WTC11 (cell line): ENCODE measurements at regions of chr22 and their contacts with region 1.

Region 1: DNA sequence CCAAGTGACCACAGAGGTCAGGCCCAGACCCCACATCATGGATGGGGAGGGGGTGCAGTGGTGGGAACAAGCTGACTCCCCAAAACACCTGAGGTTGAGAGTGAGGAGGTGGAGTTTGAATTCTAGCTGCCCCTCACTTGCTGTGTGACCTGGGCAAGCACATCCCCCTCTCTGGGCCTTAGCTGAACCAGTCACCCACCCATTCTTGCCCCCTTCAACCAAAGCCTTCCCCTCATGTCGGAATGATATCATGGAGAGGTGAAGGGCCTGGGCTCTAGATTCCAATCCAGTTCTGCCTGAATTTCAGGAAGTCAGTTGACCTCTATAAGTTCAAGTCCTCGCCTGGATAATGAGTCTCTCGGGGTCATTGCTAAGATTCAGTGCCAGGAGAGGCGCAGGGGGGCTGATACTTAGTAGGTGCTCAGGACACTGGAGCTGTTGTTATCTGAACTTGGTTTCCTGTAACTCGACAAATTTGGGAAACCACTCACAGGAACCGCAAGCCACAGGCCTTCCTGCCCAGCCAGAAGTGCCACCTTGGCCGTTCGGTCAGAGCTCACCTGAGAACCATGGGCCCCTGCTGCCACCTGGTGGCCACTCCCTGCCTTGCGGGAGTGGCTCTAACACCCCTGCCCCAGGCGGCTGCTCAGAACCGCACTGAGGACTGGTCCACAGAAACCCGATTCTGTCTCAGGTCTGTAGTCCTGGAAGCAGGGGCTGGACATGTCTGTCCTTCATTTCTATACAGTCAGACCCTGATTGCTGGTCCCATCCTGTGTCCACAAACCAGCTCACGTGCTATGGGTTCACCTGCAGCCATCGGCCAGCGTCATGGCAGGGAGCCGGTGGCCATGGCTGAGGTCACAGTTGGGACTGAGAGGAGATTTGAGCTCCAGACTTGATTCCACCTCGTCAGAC is 6.9 kb downstream of the CDC42EP1 start:
- DNase-seq: peak; percentile 92
- ATAC-seq: peak; percentile 81
- H3K4me3 Mint-ChIP-seq: no peak overlapping the region
- H3K27ac Mint-ChIP-seq: no peak overlapping the region
- H3K4me1 Mint-ChIP-seq: peaks cover 46% of the 10 kb centered on the region
- H3K27me3 Mint-ChIP-seq: peaks cover 10% of the 10 kb centered on the region
- CTCF ChIP-seq: peak; percentile 90

Region 2: GRCh38 chr22:37498289-37498909 is 68.8 kb before region 1 on chr22:
- CTCF ChIA-PET with region 1: interaction called, 12 read pairs
- POLR2A ChIA-PET with region 1: no interaction called
- DNase-seq: peak; percentile 90
- ATAC-seq: peak; percentile 92
- H3K4me3 Mint-ChIP-seq: no peak overlapping the region
- H3K27ac Mint-ChIP-seq: no peak overlapping the region
- H3K4me1 Mint-ChIP-seq: peaks cover 34% of the 10 kb centered on the region
- H3K27me3 Mint-ChIP-seq: no peaks in the 10 kb centered on the region
- CTCF ChIP-seq: peak; percentile 78

Region 3: GRCh38 chr22:37538590-37539357 is 28.4 kb before region 1 on chr22:
- CTCF ChIA-PET with region 1: interaction called, 728 read pairs
- POLR2A ChIA-PET with region 1: interaction called, 3 read pairs
- DNase-seq: peak; percentile 95
- ATAC-seq: peak; percentile 100
- H3K4me3 Mint-ChIP-seq: no peak overlapping the region
- H3K27ac Mint-ChIP-seq: no peak overlapping the region
- H3K4me1 Mint-ChIP-seq: peaks cover 12% of the 10 kb centered on the region
- H3K27me3 Mint-ChIP-seq: no peaks in the 10 kb centered on the region; the same call in 1 of the 2 replicates
- CTCF ChIP-seq: peak; percentile 81

Region 4: DNA sequence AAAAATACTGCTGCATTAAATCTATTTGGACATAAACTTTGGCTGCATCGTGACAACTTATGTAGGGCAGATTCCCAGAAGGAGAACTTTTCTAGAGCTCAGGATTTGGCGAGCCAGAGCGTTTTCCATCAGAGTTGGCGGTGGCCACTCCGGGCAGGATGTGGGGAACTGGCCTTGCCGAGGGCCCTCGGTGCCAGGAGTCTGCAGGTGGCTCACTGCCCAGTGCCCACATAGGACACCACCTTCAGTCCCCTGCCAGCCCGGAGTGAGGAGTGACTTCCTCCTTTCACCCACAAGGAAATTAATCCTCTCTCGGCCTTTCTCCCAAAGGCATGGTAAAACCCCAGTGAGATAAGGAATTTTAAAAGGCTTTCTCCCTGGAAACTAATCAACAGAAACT is 14.3 kb after region 1 on chr22:
- CTCF ChIA-PET with region 1: interaction called, 22 read pairs
- POLR2A ChIA-PET with region 1: interaction called, 3 read pairs
- DNase-seq: no peak
- ATAC-seq: no peak
- H3K4me3 Mint-ChIP-seq: no peak overlapping the region
- H3K27ac Mint-ChIP-seq: no peak overlapping the region
- H3K4me1 Mint-ChIP-seq: peaks cover 4% of the 10 kb centered on the region
- H3K27me3 Mint-ChIP-seq: no peaks in the 10 kb centered on the region; the same call in 1 of the 2 replicates
- CTCF ChIP-seq: no peak